ENCODE measurements at regions of chr2 and their contacts with region 1.

Region 1: DNA sequence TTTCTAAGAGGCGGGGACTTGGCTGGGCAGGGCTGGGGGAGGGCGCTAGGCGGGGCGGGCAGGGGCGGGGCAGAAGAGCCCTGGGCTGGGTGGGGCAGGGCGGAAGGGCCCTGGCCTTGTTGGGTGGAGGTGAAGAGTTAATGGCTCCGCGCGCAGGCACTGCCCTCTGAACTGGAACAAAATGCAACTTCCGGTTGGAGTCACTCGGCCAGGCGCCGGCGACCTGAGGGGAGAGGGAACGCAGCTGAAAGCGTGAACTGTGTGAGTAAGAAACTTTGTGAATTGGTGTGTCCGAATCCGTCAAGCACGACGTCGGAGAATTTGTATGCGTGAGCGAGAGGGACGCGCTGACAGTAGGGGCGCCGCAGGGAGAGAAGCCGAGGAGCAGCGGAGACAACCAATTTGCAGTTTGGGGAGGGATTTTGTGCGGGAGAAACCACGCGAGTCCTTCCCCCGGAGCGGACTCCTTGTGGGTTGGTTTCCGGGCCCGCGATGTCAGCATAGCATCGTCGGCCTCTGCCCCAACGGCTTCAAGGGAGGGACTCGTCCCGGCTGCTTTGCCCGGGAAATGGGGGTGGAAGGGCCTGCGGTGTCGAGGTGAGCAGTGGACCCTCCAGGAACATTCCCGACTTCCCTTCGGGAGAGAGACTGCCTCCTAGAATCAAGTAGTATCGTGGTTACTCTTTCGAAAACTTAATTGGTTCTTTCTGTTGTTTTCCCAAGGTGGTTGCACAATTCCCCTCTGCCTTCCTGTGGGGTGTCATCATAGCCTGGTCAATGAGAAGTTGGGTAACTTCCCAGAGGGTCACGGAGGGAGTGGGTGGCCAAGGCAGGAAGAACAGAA is at the start of gene TANK:
- DNase-seq: peak; percentile 90
- H3K4me3 Mint-ChIP-seq: peak within 1 kb of the TSS; percentile 97
- H3K27ac Mint-ChIP-seq: peak within 1 kb of the TSS; percentile 99
- H3K4me1 Mint-ChIP-seq: peaks cover 53% of the 10 kb centered on the region
- H3K27me3 Mint-ChIP-seq: no peaks in the 10 kb centered on the region
- total RNA-seq, gene TANK: 66.2 and 70.7 TPM in 2 replicates

Region 2: GRCh38 chr2:159904127-159904958 is 1256.1 kb before region 1 on chr2:
- intact Hi-C with region 1: loop called (anchors 10 kb)
- DNase-seq: peak; percentile 71
- H3K4me3 Mint-ChIP-seq: peak within 1 kb of the TSS; percentile 94
- H3K27ac Mint-ChIP-seq: peak within 1 kb of the TSS; percentile 93
- H3K4me1 Mint-ChIP-seq: peaks cover 61% of the 10 kb centered on the region
- H3K27me3 Mint-ChIP-seq: no peaks in the 10 kb centered on the region

Region 3: DNA sequence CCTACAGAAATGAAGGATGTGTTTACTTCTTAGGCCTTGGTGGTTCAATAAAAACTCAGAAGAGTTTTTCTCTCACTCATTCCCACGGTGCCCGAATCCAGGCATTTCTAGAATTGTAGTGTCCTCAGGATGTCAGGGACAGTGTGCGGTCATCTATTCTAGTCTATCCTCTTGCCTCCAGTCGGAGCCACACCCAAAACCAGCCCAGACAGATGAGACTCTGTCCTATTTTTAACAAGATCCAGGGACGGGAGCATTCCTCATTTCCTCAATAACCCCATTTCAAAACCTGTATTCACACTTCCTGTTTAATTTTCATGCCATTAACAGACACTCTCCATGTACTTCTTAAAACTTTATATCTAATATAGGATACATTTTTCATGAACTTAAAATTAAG is 655.2 kb before region 1 on chr2:
- intact Hi-C with region 1: loop called (anchors 10 kb)
- DNase-seq: no peak
- H3K4me3 Mint-ChIP-seq: no peak overlapping the region
- H3K27ac Mint-ChIP-seq: no peak overlapping the region
- H3K4me1 Mint-ChIP-seq: peaks cover 21% of the 10 kb centered on the region
- H3K27me3 Mint-ChIP-seq: peaks cover 18% of the 10 kb centered on the region

Region 4: GRCh38 chr2:161172901-161173540 is 12.6 kb after region 1 on chr2:
- intact Hi-C with region 1: loop called (anchors 1 kb)
- DNase-seq: no peak
- H3K4me3 Mint-ChIP-seq: peak overlapping the region; percentile 11
- H3K27ac Mint-ChIP-seq: peak overlapping the region; percentile 72
- H3K4me1 Mint-ChIP-seq: peaks cover 62% of the 10 kb centered on the region
- H3K27me3 Mint-ChIP-seq: no peaks in the 10 kb centered on the region

Region 5: GRCh38 chr2:161796192-161796591 is 635.7 kb after region 1 on chr2:
- intact Hi-C with region 1: no loop called
- DNase-seq: no peak
- H3K4me3 Mint-ChIP-seq: no peak overlapping the region
- H3K27ac Mint-ChIP-seq: no peak overlapping the region
- H3K4me1 Mint-ChIP-seq: no peaks in the 10 kb centered on the region
- H3K27me3 Mint-ChIP-seq: peaks cover 18% of the 10 kb centered on the region

Region 6: DNA sequence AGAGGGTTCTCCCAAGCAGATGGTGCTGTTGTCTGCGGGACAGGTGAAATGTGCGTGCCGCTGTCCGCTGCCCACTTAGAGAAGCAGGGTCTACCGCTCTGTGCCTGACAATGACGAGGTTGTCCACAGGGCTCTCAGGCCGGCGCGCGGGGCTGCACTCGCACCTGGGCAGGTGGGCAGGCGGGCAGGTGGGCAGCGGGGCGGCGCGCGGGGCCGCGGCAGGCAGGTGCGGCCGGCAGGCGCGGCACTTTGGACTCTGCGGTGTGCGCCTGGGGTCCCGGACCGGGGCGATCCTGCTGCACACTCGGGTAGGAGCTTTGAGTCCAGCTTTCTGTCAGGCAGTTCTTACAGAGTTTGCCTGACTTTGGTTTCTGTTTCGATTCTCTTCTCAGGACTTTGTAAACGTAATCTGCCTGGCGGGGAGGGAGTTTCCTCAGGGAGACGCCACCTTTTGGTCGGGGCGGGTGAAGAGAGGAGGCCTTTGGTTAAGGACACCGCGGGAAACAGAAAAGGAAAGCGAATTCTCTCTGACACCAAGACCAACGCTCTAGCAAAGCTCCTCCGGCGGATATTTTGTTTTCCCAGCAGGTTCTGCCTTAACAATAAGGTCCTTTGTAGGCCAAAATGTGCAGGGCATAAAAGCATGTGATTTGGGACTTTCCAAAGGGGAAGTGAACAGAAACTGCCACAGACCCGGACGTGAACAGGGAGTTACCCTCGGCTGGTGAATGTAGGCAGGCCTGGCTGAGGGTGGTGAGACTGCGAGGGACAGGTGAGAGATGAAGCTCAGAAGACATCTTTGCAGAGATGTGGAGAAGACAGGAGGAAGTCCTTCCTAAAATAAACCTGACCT is 1158.1 kb after region 1 on chr2 and contains the start of gene IFIH1:
- intact Hi-C with region 1: loop called (anchors 5 kb)
- DNase-seq: peak; percentile 76
- H3K4me3 Mint-ChIP-seq: peak within 1 kb of the TSS; percentile 91
- H3K27ac Mint-ChIP-seq: peak within 1 kb of the TSS; percentile 96
- H3K4me1 Mint-ChIP-seq: peaks cover 51% of the 10 kb centered on the region
- H3K27me3 Mint-ChIP-seq: no peaks in the 10 kb centered on the region
- total RNA-seq, gene IFIH1: 14.5 and 16.1 TPM in 2 replicates